ENCODE measurements at regions of chr13 and their contacts with region 1.

Region 1: GRCh38 chr13:42875475-42876269 is 94.3 kb downstream of the FAM216B start:
- DNase-seq: no peak
- ATAC-seq: peak; percentile 38
- H3K4me3 Mint-ChIP-seq: peak overlapping the region; percentile 47
- H3K27ac Mint-ChIP-seq: peak overlapping the region; percentile 77
- H3K4me1 Mint-ChIP-seq: peaks cover 22% of the 10 kb centered on the region
- H3K27me3 Mint-ChIP-seq: peaks cover 6% of the 10 kb centered on the region
- CTCF ChIP-seq: no peak

Region 2: GRCh38 chr13:42539670-42540069 is 336.0 kb before region 1 on chr13:
- CTCF ChIA-PET with region 1: no interaction called
- POLR2A ChIA-PET with region 1: no interaction called
- intact Hi-C with region 1: loop called (anchors 5 kb)
- DNase-seq: no peak
- ATAC-seq: no peak
- H3K4me3 Mint-ChIP-seq: no peak overlapping the region
- H3K27ac Mint-ChIP-seq: no peak overlapping the region
- H3K4me1 Mint-ChIP-seq: no peaks in the 10 kb centered on the region
- H3K27me3 Mint-ChIP-seq: no peaks in the 10 kb centered on the region
- CTCF ChIP-seq: no peak

Region 3: DNA sequence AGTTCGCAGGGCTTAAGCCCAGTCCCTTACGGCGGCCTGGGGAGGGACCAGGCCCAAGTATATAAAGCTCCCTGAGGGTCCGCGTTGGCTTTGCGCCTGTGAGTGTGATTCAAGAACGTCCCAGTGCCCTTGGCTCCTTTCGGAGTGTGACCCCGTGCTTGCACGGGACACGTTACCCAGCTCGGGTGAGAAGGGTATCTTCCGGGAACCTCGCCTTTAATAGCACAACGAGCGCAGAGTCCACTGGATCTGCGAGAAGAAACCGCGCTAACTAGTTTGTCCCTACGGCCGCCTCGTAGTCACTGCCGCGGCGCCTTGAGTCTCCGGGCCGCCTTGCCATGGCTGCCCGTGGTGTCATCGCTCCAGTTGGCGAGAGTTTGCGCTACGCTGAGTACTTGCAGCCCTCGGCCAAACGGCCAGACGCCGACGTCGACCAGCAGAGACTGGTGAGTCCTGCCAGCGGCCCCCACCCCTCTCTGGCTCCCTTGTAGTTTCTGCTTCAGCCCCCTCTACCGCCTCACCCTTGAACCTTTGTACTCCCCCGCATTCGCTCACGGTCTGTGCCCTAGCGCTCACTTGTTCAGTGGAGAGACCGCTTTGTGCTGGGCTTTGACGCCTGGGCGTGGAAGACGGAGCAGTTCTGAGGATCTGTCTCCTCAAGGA is 147.7 kb after region 1 on chr13 and contains the start of gene DNAJC15:
- CTCF ChIA-PET with region 1: no interaction called
- POLR2A ChIA-PET with region 1: no interaction called
- intact Hi-C with region 1: loop called (anchors 10 kb)
- DNase-seq: peak; percentile 81
- ATAC-seq: peak; percentile 85
- H3K4me3 Mint-ChIP-seq: peak within 1 kb of the TSS; percentile 94
- H3K27ac Mint-ChIP-seq: peak within 1 kb of the TSS; percentile 97
- H3K4me1 Mint-ChIP-seq: peaks cover 47% of the 10 kb centered on the region
- H3K27me3 Mint-ChIP-seq: no peaks in the 10 kb centered on the region
- CTCF ChIP-seq: no peak
- total RNA-seq, gene DNAJC15: 19.1 and 19.3 TPM in 2 replicates

Region 4: DNA sequence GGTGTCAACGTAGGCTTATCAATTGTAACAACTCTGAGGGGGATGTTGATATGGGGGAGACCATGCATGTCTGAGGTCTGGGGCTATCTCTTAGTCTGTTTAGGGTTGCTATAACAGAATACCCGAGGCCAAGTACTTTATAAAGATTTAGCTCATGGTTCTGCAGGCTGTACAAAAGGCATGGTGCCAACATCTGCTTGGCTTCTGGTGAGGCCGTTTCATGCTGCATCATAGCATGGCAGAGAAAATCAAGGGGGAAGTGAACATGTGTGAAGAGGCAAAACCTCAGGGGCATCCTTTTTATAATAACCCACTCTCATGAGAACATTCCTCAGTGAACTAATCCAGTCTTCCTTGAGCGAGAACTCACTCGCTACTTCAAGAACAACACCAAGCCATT is 557.3 kb after region 1 on chr13:
- CTCF ChIA-PET with region 1: no interaction called
- POLR2A ChIA-PET with region 1: no interaction called
- intact Hi-C with region 1: no loop called
- DNase-seq: no peak
- ATAC-seq: no peak
- H3K4me3 Mint-ChIP-seq: no peak overlapping the region
- H3K27ac Mint-ChIP-seq: no peak overlapping the region
- H3K4me1 Mint-ChIP-seq: no peaks in the 10 kb centered on the region
- H3K27me3 Mint-ChIP-seq: peaks cover 1% of the 10 kb centered on the region
- CTCF ChIP-seq: no peak